Activated CD4-positive, alpha-beta T cell treated with anti-CD3 and anti-CD28 coated beads for 36 hours (primary cell): ENCODE measurements at regions of chr1 and their contacts with region 1.

Region 1: GRCh38 chr1:151909150-151910149 is at the start of gene THEM4:
- DNase-seq: peak; percentile 98
- ATAC-seq: peak; percentile 93
- H3K4me3 Mint-ChIP-seq: peak within 1 kb of the TSS; percentile 82
- H3K27ac Mint-ChIP-seq: peak within 1 kb of the TSS; percentile 91
- H3K4me1 Mint-ChIP-seq: peaks cover 42% of the 10 kb centered on the region
- H3K27me3 Mint-ChIP-seq: no peaks in the 10 kb centered on the region
- total RNA-seq, gene THEM4: 23.9 to 26.0 TPM

Region 2: GRCh38 chr1:151898513-151898991 is 10.9 kb before region 1 on chr1:
- CTCF ChIA-PET with region 1: interaction called, 10 read pairs
- POLR2A ChIA-PET with region 1: interaction called, 5 read pairs
- intact Hi-C with region 1: no loop called
- DNase-seq: peak; percentile 66
- ATAC-seq: peak; percentile 75
- H3K4me3 Mint-ChIP-seq: peak overlapping the region; percentile 58
- H3K27ac Mint-ChIP-seq: peak overlapping the region; percentile 97
- H3K4me1 Mint-ChIP-seq: peaks cover 69% of the 10 kb centered on the region
- H3K27me3 Mint-ChIP-seq: no peaks in the 10 kb centered on the region

Region 3: GRCh38 chr1:151924679-151925587 is 15.5 kb after region 1 on chr1:
- CTCF ChIA-PET with region 1: interaction called, 5 read pairs
- POLR2A ChIA-PET with region 1: no interaction called
- intact Hi-C with region 1: loop called in 1 of 2 experiments (anchors 1 kb)
- DNase-seq: no peak
- ATAC-seq: peak; percentile 80
- H3K4me3 Mint-ChIP-seq: no peak overlapping the region
- H3K27ac Mint-ChIP-seq: peak overlapping the region; percentile 67
- H3K4me1 Mint-ChIP-seq: peaks cover 19% of the 10 kb centered on the region
- H3K27me3 Mint-ChIP-seq: no peaks in the 10 kb centered on the region